ENCODE measurements at regions of chr5 and their contacts with region 1.

Region 1: DNA sequence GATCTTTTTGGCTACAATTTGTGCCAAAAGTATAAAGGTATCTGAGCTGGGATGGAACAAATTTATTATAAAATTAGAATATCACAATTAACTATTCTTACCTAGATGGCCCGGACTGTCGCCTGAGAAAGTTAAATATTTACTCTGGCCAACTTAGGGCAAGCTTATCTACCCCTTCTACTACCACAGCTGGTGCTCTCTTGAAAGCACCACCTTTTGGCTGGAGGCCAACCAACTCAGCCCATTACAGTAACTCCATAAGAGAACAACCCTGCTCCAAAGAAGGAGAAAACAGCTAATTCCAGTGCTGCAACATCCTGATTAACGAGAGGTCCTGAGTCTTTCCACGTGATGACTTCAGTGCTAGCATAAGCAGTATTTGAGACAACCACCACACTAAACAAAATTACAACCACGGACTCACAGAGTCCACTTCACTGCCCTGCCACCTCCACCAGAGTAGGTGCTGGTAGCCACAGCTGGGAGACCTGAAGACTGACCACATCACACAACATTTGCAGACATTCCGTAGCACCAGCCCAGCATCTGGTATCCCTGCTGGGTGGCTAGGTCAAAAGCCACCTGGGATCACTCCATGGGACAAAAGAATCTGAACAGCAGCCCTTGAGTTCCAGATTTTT is 43.2 kb downstream of the RGMB start:
- ATAC-seq: peak in 1 of 8 experiments; percentile 27
- H3K4me3 ChIP-seq: no peak overlapping the region
- H3K27ac ChIP-seq: no peak overlapping the region
- H3K4me1 ChIP-seq: no peaks in the 10 kb centered on the region

Region 2: GRCh38 chr5:97183100-97183929 is 1633.4 kb before region 1 on chr5 and contains the start of gene RIOK2:
- in situ Hi-C with region 1: loop called in 1 of 9 experiments (anchors 25 kb)
- ATAC-seq: peak; percentile 87 to 94 (median 92)
- H3K4me3 ChIP-seq: peak within 1 kb of the TSS; percentile 54 to 76 (median 58)
- H3K27ac ChIP-seq: peak within 1 kb of the TSS; percentile 94 to 96
- H3K4me1 ChIP-seq: peaks cover 0 to 7% of the 10 kb centered on the region in 2 donors
- total RNA-seq, gene RIOK2: 20.9 to 50.1 (median 26.5) TPM